H1 (cell line): ENCODE measurements at regions of chr19 and their contacts with region 1.

Region 1: GRCh38 chr19:49929611-49930482 is 543 bp upstream of the NUP62 start:
- DNase-seq: peak; percentile 96 to 97
- H3K4me3 ChIP-seq: peak overlapping the region; percentile 71 to 91 (median 86)
- H3K27ac ChIP-seq: peak overlapping the region; percentile 96
- H3K4me1 ChIP-seq: peaks cover 0 to 5% (median under 1%) of the 10 kb centered on the region in 4 experiments; a peak in 3 of 7 replicates
- H3K27me3 ChIP-seq: no peaks in the 10 kb centered on the region
- CTCF ChIP-seq: no peak
- EP300 ChIP-seq: no peak
- POLR2A ChIP-seq: peak; percentile 97 to 99
- RAD21 ChIP-seq: no peak

Region 2: DNA sequence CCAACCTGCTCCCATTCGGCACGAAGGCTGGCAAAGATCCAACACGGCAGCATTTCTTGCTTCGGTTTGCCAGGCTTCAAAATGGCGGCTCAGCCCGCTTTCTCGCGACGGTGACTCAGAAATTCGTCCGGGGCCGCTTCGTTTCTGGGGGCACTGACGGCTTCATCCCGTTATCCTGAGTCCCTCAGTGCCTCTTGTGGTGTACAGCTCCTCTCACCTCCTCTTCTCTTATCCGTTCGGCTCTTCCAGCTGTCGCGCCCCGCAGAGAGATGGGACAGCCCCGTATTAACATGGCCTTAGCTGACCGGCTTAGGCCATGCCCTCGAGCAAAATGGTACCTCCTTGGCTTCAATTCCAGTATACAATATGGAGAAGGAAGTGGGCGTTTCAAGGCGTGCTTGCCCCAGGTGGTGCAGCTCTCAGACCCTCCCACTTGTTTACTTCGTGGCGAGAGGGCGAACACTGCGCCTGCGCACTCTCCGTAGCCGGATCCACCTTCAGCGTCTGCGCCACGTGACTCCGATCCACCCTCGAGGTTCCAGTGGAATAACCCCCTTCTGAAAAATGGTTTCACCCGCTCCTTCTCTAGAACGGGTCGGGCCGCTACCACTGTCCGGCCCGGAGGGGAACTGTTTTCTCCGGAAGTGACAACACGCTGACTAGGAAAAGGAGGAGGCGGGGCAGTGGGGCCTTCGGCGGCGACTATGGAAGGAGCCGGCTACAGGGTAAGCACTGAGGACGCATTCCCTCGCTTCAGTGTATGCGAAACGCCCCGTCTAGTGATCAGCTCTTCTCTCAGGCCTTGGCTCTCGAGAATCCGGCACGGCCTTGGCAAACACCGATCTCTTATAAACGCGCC is 52.6 kb before region 1 on chr19 and contains the starts of genes AKT1S1 and TBC1D17:
- CTCF ChIA-PET with region 1: no interaction called
- POLR2A ChIA-PET with region 1: interaction called, 39 read pairs
- DNase-seq: peak; percentile 96 to 100
- H3K4me3 ChIP-seq: peak within 1 kb of the TSS; percentile 90 to 95 (median 92)
- H3K27ac ChIP-seq: peak within 1 kb of the TSS; percentile 99
- H3K4me1 ChIP-seq: peaks cover 0 to 13% (median 7%) of the 10 kb centered on the region in 4 experiments; a peak in 6 of 7 replicates
- H3K27me3 ChIP-seq: no peaks in the 10 kb centered on the region
- CTCF ChIP-seq: no peak
- EP300 ChIP-seq: peak in 1 of 2 experiments; percentile 100; a peak in 2 of 3 replicates
- POLR2A ChIP-seq: peak; percentile 83 to 90
- RAD21 ChIP-seq: no peak
- total RNA-seq, gene AKT1S1: 45.9 and 46.7 TPM in 2 replicates
- total RNA-seq, gene TBC1D17: 44.9 and 47.6 TPM in 2 replicates

Region 3: DNA sequence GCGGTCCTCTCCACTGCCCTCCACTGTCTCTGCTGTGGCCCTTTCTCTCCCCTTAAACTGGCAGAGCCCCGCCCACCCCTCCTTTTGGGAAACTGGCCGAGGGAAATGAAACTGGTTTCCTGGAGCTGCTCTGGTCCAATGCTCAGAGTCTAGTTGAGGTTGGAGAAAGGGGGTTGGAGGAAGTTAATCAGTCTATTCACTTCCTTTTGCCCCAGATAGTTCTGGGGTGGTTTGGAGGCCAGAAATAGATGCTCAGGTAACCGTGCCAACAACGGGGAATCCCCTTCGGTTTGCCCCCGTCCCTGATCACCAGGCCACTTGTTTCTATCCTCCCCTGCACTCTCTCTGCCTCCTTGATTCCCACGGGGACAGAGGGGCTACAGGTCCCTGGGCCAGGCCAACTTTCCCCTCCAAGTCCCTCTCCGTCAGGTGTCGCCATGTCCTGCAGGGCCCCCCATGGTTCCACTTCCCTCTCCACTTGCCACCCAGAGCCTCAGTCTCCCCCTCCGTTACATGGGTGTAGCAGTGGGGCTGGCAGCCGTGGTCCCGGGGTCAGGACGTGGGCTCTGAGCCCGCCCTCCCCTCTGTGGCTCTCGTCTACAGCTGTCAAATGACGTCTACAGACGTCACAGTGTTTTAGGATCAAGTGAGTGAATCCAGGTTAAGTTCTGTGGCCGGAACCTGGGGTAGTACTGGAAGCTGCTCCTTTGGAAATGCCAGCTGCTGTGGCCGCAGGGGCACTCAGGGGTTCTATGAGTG is 32.8 kb before region 1 on chr19 and contains the start of gene IL4I1:
- CTCF ChIA-PET with region 1: no interaction called
- POLR2A ChIA-PET with region 1: interaction called, 82 read pairs
- DNase-seq: no peak
- H3K4me3 ChIP-seq: no peak within 1 kb of the TSS
- H3K27ac ChIP-seq: no peak within 1 kb of the TSS
- H3K4me1 ChIP-seq: 0 out of 7 replicates have a peak, but pooled peaks cover 0 to 7% (median 0%) of the 10 kb centered on the region in 4 experiments
- H3K27me3 ChIP-seq: 0 out of 7 replicates have a peak, but pooled peaks cover 0 to 3% (median 0%) of the 10 kb centered on the region in 4 experiments
- CTCF ChIP-seq: no peak
- EP300 ChIP-seq: no peak
- POLR2A ChIP-seq: no peak
- RAD21 ChIP-seq: no peak
- total RNA-seq, gene IL4I1: 0.67 and 0.76 TPM in 2 replicates

Region 4: DNA sequence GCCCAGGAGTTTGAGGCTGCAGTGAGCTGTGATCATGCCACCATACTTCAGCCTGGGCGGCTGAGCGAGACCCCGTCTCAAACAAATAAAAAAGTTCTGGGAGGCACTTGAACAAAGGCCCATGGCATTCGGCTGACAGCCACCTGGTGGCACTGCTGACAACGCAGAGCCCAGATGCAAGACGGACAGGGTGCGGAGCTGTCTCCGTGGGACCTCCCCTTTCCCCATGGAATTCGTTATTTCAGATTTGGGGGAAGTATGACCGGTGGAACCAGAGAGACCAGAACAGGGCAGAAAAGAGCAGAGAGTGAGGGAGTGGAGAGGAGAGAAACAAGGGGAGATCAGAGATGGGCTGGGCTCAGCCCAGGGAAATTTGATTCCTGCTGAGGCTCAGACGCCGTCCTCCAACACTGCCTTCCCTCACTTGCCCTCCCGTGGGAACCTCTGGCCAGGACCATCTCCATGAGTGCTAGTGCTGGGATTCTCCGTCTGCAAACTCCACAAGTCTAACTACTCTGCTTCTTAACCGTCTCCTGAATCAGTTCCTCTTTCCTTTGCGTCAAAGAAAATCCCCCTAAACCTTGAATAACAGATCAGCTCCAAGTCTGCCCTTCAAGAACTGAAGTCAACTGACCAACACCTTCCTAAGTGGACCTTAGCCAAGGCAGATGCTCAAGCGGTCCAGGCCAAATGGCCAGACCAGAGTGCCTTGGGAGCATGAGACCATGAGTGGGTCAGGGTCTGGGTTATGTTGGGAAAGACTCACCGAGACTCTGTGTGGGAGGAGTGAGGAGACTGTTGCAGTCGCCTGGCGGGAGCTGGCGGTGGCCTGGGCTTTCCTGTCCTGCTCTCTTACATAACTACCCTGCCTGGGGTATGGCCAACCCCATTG is 12.8 kb before region 1 on chr19:
- CTCF ChIA-PET with region 1: interaction called, 18 read pairs
- POLR2A ChIA-PET with region 1: interaction called, 373 read pairs
- DNase-seq: no peak
- H3K4me3 ChIP-seq: no peak overlapping the region
- H3K27ac ChIP-seq: peak overlapping the region; percentile 54; the same call in 1 of the 2 replicates
- H3K4me1 ChIP-seq: peaks cover 0 to 7% (median 1%) of the 10 kb centered on the region in 4 experiments; a peak in 3 of 7 replicates
- H3K27me3 ChIP-seq: no peaks in the 10 kb centered on the region
- CTCF ChIP-seq: peak; percentile 50 to 72 (median 60)
- EP300 ChIP-seq: no peak
- POLR2A ChIP-seq: no peak
- RAD21 ChIP-seq: peak; percentile 23 to 47; a peak in 2 of 4 replicates

Region 5: GRCh38 chr19:49971991-49972411 is 42.2 kb after region 1 on chr19:
- CTCF ChIA-PET with region 1: interaction called, 231 read pairs
- POLR2A ChIA-PET with region 1: interaction called, 12 read pairs
- DNase-seq: no peak
- H3K4me3 ChIP-seq: no peak overlapping the region
- H3K27ac ChIP-seq: no peak overlapping the region
- H3K4me1 ChIP-seq: no peaks in the 10 kb centered on the region
- H3K27me3 ChIP-seq: no peaks in the 10 kb centered on the region
- CTCF ChIP-seq: no peak
- EP300 ChIP-seq: no peak
- POLR2A ChIP-seq: no peak
- RAD21 ChIP-seq: no peak

Region 6: GRCh38 chr19:50025024-50025789 is 95.4 kb after region 1 on chr19 and contains the start of gene VRK3:
- CTCF ChIA-PET with region 1: no interaction called
- POLR2A ChIA-PET with region 1: interaction called, 15 read pairs
- DNase-seq: peak; percentile 93 to 98
- H3K4me3 ChIP-seq: peak within 1 kb of the TSS; percentile 73 to 92 (median 90)
- H3K27ac ChIP-seq: peak within 1 kb of the TSS; percentile 87
- H3K4me1 ChIP-seq: peaks cover 0 to 6% (median 0%) of the 10 kb centered on the region in 4 experiments; a peak in 3 of 7 replicates
- H3K27me3 ChIP-seq: no peaks in the 10 kb centered on the region
- CTCF ChIP-seq: no peak
- EP300 ChIP-seq: no peak
- POLR2A ChIP-seq: 0 out of 3 replicates have a peak, but pooled peaks of 1 of the 2 experiments have one; percentile 19
- RAD21 ChIP-seq: no peak
- total RNA-seq, gene VRK3: 34.5 and 36.1 TPM in 2 replicates

Region 7: DNA sequence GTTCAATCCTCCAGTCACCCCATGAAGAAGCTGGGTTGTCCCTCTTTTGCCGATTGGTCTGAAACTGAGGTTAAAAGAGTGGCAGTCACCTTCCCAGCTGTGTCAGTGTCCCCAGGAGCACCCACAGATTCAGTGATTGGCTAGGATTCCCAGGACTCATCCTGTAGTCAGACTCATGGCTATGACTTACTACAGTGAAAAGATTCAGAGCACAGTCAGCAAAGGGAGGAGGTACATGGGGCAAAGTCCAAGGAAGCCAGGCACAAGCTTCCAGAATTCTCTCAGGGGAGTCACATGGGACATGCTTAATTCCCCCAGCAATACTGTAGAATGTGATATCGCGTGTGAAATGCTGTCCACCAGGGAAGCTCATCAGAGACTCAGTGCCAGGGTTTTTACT is 110.1 kb after region 1 on chr19:
- CTCF ChIA-PET with region 1: no interaction called
- POLR2A ChIA-PET with region 1: no interaction called
- DNase-seq: no peak
- H3K4me3 ChIP-seq: no peak overlapping the region
- H3K27ac ChIP-seq: no peak overlapping the region
- H3K4me1 ChIP-seq: no peaks in the 10 kb centered on the region
- H3K27me3 ChIP-seq: no peaks in the 10 kb centered on the region
- CTCF ChIP-seq: no peak
- EP300 ChIP-seq: no peak
- POLR2A ChIP-seq: no peak
- RAD21 ChIP-seq: no peak